Tibial artery (tissue), 4 donors: ENCODE measurements at regions of chr6 and their contacts with region 1.

Region 1: GRCh38 chr6:75526502-75527127 is 33.0 kb upstream of the FILIP1 start:
- DNase-seq: peak; percentile 59 to 65
- H3K4me3 ChIP-seq: no peak overlapping the region
- H3K27ac ChIP-seq: no peak overlapping the region
- H3K4me1 ChIP-seq: peaks cover 0 to 10% (median 5%) of the 10 kb centered on the region in 4 donors
- H3K27me3 ChIP-seq: no peaks in the 10 kb centered on the region
- CTCF ChIP-seq: peak; percentile 64 to 90

Region 2: DNA sequence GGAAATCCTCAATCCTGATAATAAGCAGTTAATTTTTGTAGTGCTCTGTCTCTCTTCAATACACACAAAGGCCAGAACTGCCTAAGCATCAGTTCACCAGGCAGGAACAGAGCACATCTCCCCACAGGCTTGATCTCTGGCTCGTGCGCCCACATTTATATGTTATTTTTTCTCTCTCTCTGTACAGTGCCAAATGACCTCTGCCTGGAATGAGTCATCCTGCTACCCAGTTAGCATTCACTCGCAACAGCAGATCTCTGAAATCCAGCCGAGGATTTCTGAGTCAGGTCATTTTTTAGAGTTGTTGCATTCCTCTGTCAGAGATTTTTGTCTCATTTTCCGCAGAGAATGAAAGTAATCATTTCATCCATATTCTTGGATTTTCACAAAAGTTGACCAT is 427.9 kb before region 1 on chr6:
- intact Hi-C with region 1: loop called (anchors 10 kb)
- DNase-seq: peak; percentile 79 to 87
- H3K4me3 ChIP-seq: no peak overlapping the region
- H3K27ac ChIP-seq: peak overlapping the region; percentile 39 to 48
- H3K4me1 ChIP-seq: peaks cover 0 to 49% (median 16%) of the 10 kb centered on the region in 4 donors
- H3K27me3 ChIP-seq: no peaks in the 10 kb centered on the region
- CTCF ChIP-seq: no peak

Region 3: DNA sequence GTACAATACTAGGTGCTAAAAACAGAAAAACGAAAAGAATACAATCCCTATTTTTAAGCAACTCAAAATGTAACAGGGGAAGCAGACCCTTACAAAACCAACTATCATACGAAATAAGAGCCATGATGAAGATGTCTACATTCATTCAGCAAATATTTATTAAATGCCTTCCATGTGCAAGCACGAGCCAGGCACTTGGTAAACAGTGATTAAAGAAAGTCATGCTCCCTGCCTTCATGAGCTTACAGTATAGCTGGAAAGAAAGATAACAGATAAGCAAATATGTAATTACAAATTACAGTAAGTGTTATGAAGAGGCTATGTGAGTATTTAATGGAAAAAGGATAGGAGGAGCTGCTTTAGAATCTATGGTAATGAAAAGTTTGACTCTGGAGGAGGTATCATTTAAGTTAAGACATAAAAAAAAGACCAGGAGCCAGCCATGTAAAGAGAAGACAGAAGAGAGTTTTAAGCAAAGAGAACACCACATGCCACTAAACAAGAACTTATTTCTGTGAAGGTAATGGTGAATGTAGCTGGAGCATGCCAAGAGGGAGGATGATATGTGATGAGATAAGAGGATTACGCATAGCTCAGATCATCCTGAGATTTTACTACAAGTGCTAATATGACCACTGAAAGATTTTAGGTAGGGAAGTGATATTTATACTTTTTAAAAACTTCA is 263.8 kb before region 1 on chr6:
- intact Hi-C with region 1: loop called (anchors 5 kb)
- DNase-seq: no peak
- H3K4me3 ChIP-seq: no peak overlapping the region
- H3K27ac ChIP-seq: no peak overlapping the region
- H3K4me1 ChIP-seq: peaks cover 0 to 9% (median 5%) of the 10 kb centered on the region in 4 donors
- H3K27me3 ChIP-seq: no peaks in the 10 kb centered on the region
- CTCF ChIP-seq: no peak

Region 4: DNA sequence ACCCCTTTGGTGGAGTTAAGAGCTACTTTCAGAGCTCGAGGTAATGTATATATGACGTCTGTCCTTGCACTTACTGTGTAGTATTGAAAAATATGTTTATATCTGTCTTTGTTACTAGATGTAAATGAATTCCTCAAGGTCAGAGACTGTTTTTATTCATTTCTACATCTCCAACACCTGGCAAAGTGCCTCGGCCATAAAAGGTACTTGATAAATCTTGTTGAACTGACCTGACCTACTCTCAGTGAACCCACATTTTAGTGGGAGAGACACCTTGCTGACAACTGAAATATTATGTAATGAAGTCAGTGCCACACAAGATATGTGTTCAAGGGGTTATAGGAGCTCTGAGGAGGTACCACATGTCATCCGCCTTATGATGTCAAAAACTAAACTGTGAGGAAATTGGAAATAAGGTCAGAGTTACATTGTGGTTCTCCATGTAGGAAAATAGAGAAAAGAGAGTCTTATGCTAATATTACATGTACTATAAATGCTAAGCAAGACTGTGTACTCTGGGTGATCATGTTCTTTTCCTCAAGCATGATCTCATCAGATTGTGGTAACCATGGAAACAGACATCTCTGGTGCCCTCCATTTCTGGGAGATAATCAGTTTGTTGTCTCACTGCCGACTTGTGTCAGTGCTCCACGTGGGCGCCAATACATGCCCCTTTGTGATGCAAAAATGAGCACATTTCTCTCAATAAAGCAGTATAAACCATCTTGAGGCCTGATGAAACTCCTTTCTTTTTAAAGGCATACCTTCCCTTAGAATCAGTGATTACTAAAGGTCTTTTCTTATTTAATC is 236.3 kb before region 1 on chr6:
- intact Hi-C with region 1: loop called (anchors 5 kb)
- DNase-seq: no peak
- H3K4me3 ChIP-seq: no peak overlapping the region
- H3K27ac ChIP-seq: peak overlapping the region; percentile 58 to 65
- H3K4me1 ChIP-seq: peaks cover 0 to 55% (median 18%) of the 10 kb centered on the region in 4 donors
- H3K27me3 ChIP-seq: no peaks in the 10 kb centered on the region
- CTCF ChIP-seq: no peak